ENCODE measurements at regions of chr2 and their contacts with region 1.

Region 1: DNA sequence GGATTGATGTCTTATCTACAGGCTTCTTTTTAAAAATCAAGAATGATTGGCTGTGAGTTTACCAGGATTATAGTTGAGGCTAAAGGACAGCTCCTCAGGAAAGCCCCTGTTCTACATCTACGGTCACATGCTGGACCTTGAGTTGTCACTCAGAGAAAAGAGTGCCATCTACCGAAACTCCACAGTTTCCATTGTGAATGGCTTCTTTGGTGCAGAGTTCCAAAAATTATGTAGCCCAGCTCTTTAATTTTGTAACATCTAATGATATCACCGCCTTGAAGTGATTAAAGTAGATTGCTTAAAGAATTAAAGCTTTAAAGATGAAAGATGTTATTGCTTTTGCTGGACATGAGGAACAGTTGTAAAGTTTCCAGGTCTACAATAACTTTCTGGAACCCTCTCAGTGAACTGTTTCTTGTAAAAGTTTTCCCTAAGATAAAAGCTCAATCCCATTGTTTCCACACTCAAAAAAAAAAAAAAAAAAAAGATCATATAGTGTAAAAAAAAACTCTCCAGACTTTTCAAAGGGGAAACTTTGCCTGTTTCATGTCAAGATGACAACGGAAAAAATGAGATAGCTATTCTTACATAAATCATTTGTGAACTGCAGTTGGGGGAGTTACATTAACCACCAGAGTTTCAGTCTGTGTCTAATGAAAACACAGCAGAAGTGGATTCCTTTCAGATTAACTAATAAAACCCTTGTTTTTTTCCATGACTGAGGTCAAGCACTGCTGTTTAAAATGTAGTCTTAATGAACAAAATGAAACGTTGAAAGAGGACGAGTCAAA is 4.3 kb downstream of the COL3A1 start:
- DNase-seq: no peak
- H3K4me3 ChIP-seq: peak overlapping the region; percentile 53 to 73
- H3K27ac ChIP-seq: peak overlapping the region; percentile 83 to 85
- H3K4me1 ChIP-seq: peaks cover 3 to 23% of the 10 kb centered on the region in 2 donors
- H3K27me3 ChIP-seq: no peaks in the 10 kb centered on the region
- CTCF ChIP-seq: peak in 2 of 3 experiments; percentile 46 to 57

Region 2: GRCh38 chr2:188788621-188789020 is 189.9 kb before region 1 on chr2:
- intact Hi-C with region 1: loop called (anchors 2 kb)
- DNase-seq: peak; percentile 15 to 88
- H3K4me3 ChIP-seq: no peak overlapping the region
- H3K27ac ChIP-seq: peak overlapping the region; percentile 68 to 80
- H3K4me1 ChIP-seq: peaks cover 0 to 28% of the 10 kb centered on the region in 2 donors
- H3K27me3 ChIP-seq: no peaks in the 10 kb centered on the region
- CTCF ChIP-seq: no peak

Region 3: DNA sequence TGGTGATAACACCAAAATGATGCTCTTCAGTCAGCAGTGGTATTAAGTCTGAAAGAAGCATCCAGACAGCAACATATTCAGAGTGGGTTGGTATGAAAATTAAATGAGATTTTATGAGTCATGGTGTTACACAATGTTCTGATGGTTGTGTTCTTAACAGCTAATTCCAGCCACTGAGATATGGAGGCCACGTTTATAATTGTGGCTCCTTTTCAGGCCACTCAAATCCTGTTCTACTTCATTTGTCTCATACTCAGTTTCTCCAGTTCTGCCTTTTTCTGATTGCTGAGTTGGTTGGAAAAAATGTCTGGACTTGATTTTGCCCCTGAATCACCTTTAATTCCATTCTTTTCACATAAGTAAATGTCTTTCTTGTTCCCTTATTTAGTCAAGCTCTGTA is 167.0 kb before region 1 on chr2:
- intact Hi-C with region 1: loop called (anchors 10 kb)
- DNase-seq: no peak
- H3K4me3 ChIP-seq: no peak overlapping the region
- H3K27ac ChIP-seq: peak overlapping the region; percentile 67 to 68
- H3K4me1 ChIP-seq: peaks cover 6 to 7% of the 10 kb centered on the region in 2 donors
- H3K27me3 ChIP-seq: no peaks in the 10 kb centered on the region
- CTCF ChIP-seq: no peak

Region 4: DNA sequence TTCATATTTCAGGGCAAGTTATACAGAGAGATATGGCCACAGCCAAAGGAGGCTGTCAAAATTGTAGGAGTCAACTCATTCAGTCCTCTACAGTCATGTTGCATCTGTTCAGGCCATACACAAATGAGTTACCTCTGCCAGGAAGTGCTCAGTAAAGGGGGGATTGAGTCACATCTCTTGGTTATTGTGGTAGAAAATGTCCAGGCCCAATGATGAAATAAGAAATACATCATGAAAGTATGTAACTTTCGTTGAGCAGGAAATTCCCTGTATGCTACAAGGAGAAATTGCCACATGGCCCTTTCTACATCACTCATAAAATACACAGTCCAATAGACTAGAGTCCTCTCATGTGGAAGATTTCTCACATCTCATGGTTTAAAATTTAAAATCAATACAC is 108.2 kb before region 1 on chr2:
- intact Hi-C with region 1: loop called (anchors 5 kb)
- DNase-seq: no peak
- H3K4me3 ChIP-seq: no peak overlapping the region
- H3K27ac ChIP-seq: peak overlapping the region; percentile 37 to 60
- H3K4me1 ChIP-seq: peaks cover 0 to 16% of the 10 kb centered on the region in 2 donors
- H3K27me3 ChIP-seq: no peaks in the 10 kb centered on the region
- CTCF ChIP-seq: no peak

Region 5: GRCh38 chr2:188897096-188897495 is 81.4 kb before region 1 on chr2:
- intact Hi-C with region 1: loop called (anchors 10 kb)
- DNase-seq: no peak
- H3K4me3 ChIP-seq: peak overlapping the region; percentile 30 to 32
- H3K27ac ChIP-seq: peak overlapping the region; percentile 35 to 75
- H3K4me1 ChIP-seq: peaks cover 0 to 14% of the 10 kb centered on the region in 2 donors
- H3K27me3 ChIP-seq: no peaks in the 10 kb centered on the region
- CTCF ChIP-seq: no peak

Region 6: GRCh38 chr2:188937228-188938220 is 41.0 kb before region 1 on chr2:
- intact Hi-C with region 1: loop called (anchors 2 kb)
- DNase-seq: no peak
- H3K4me3 ChIP-seq: no peak overlapping the region
- H3K27ac ChIP-seq: peak overlapping the region; percentile 76 to 83
- H3K4me1 ChIP-seq: peaks cover 0 to 22% of the 10 kb centered on the region in 2 donors
- H3K27me3 ChIP-seq: no peaks in the 10 kb centered on the region
- CTCF ChIP-seq: no peak